ENCODE measurements at regions of chr18 and their contacts with region 1.

Region 1: DNA sequence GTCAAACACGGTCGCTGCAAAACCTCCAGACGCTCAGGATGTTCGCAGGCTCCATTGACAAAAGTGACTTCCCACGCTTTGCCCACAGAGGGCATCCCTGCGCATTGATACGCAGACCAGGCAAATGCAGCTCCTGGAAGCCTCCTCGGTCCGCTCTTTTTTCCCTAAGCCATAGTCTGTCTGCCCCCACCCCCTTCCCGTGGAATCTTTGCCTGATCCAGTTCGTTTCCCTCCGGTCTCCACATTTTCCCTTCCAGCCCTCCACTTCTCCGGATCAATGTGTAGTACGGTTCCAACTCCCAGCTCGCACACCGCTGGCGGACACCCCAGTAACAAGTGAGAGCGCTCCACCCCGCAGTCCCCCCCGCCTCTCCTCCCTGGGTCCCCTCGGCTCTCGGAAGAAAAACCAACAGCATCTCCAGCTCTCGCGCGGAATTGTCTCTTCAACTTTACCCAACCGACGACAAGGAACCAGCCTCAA is at the start of gene DCC:
- DNase-seq: peak in 1 of 2 donors; percentile 18
- ATAC-seq: peak in 4 of 8 donors; percentile 17 to 65 (median 48)
- H3K4me3 ChIP-seq: peak within 1 kb of the TSS in 4 of 10 donors; percentile 17 to 26 (median 20)
- H3K27ac ChIP-seq: no peak within 1 kb of the TSS
- H3K4me1 ChIP-seq: peaks cover 0 to 9% (median 0%) of the 10 kb centered on the region in 9 donors
- H3K27me3 ChIP-seq: peaks cover 3 to 89% (median 65%) of the 10 kb centered on the region in 7 donors
- CTCF ChIP-seq: peak in 7 of 9 donors; percentile 26 to 50 (median 34)
- total RNA-seq, gene DCC: 0.07 to 0.89 (median 0.11) TPM in 3 of 10 donors, not detected in the others

Region 2: GRCh38 chr18:52409727-52410126 is 69.8 kb after region 1 on chr18:
- intact Hi-C with region 1: loop called in 1 of 10 experiments (anchors 10 kb)
- DNase-seq: no peak
- ATAC-seq: no peak
- H3K4me3 ChIP-seq: no peak overlapping the region
- H3K27ac ChIP-seq: no peak overlapping the region
- H3K4me1 ChIP-seq: no peaks in the 10 kb centered on the region
- H3K27me3 ChIP-seq: no peaks in the 10 kb centered on the region
- CTCF ChIP-seq: no peak

Region 3: GRCh38 chr18:52670896-52671295 is 331.0 kb after region 1 on chr18:
- intact Hi-C with region 1: loop called in 2 of 10 experiments (anchors 1 to 10 kb)
- DNase-seq: no peak
- ATAC-seq: no peak
- H3K4me3 ChIP-seq: no peak overlapping the region
- H3K27ac ChIP-seq: no peak overlapping the region
- H3K4me1 ChIP-seq: no peaks in the 10 kb centered on the region
- H3K27me3 ChIP-seq: no peaks in the 10 kb centered on the region
- CTCF ChIP-seq: peak in 7 of 9 donors; percentile 3 to 46 (median 27)

Region 4: GRCh38 chr18:53268455-53268854 is 928.5 kb after region 1 on chr18:
- intact Hi-C with region 1: loop called in 1 of 10 experiments (anchors 10 kb)
- DNase-seq: no peak
- ATAC-seq: no peak
- H3K4me3 ChIP-seq: no peak overlapping the region
- H3K27ac ChIP-seq: no peak overlapping the region
- H3K4me1 ChIP-seq: no peaks in the 10 kb centered on the region
- H3K27me3 ChIP-seq: no peaks in the 10 kb centered on the region
- CTCF ChIP-seq: no peak

Measured in heart right ventricle (tissue), 16 donors.